ENCODE measurements at regions of chr2 and their contacts with region 1.

Region 1: GRCh38 chr2:42132966-42133641 is 36.0 kb upstream of the EML4 start:
- DNase-seq: peak; percentile 85
- ATAC-seq: peak; percentile 92
- H3K4me3 Mint-ChIP-seq: peak overlapping the region; percentile 78
- H3K27ac Mint-ChIP-seq: peak overlapping the region; percentile 97
- H3K4me1 Mint-ChIP-seq: peaks cover 69% of the 10 kb centered on the region
- H3K27me3 Mint-ChIP-seq: no peaks in the 10 kb centered on the region

Region 2: GRCh38 chr2:42169100-42169873 is 36.2 kb after region 1 on chr2 and contains the start of gene EML4:
- POLR2A ChIA-PET with region 1: interaction called, 45 read pairs
- DNase-seq: peak; percentile 99
- ATAC-seq: peak; percentile 86
- H3K4me3 Mint-ChIP-seq: peak within 1 kb of the TSS; percentile 11
- H3K27ac Mint-ChIP-seq: no peak within 1 kb of the TSS
- H3K4me1 Mint-ChIP-seq: peaks cover 26% of the 10 kb centered on the region
- H3K27me3 Mint-ChIP-seq: no peaks in the 10 kb centered on the region
- total RNA-seq, gene EML4: 111 to 119 TPM

Region 3: DNA sequence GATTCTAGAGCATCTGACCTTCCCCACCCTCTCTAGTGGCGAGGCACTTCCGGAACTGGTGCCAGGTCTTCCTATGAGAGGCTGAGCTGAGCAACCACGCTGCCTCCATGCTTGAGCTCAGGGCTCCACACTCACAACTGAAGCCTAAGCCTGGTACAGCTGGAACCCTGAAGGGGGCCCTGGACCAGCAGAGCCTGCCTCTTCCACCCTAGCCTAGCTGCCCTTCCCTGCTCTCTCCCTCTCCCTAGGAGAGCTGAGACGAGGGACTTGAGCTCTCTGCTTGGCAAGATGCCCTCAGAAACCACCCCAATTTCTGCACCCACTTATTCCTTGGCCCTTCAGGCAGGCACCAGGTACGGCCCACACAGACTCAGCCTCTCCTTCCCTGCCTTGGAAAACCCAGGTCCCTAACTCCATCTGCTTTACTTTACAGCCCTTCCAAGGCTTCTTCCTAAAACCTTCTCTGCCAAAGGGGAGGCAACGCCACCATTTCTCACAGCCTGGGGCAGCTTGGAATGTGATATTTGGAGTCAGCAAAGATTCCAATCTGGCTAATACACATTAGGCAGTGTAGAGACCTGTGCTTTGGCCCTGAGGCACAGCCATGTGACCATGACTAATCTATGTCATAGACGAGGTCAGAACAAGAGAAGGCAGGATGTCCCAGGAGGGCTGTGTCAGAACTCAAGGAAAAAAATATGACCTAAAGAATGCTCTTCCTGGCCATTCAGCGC is 209.1 kb after region 1 on chr2:
- POLR2A ChIA-PET with region 1: no interaction called
- DNase-seq: no peak
- ATAC-seq: peak; percentile 66
- H3K4me3 Mint-ChIP-seq: no peak overlapping the region
- H3K27ac Mint-ChIP-seq: peak overlapping the region; percentile 82
- H3K4me1 Mint-ChIP-seq: peaks cover 24% of the 10 kb centered on the region
- H3K27me3 Mint-ChIP-seq: no peaks in the 10 kb centered on the region

Measured in activated naive CD8-positive, alpha-beta T cell treated with anti-CD3 and anti-CD28 coated beads, Interleukin-2, amount 10 ng/mL, durations not matched to agents 7 days and 5 days (primary cell).